Sigmoid colon (tissue), 7 donors: ENCODE measurements at regions of chr1 and their contacts with region 1.

Region 1: DNA sequence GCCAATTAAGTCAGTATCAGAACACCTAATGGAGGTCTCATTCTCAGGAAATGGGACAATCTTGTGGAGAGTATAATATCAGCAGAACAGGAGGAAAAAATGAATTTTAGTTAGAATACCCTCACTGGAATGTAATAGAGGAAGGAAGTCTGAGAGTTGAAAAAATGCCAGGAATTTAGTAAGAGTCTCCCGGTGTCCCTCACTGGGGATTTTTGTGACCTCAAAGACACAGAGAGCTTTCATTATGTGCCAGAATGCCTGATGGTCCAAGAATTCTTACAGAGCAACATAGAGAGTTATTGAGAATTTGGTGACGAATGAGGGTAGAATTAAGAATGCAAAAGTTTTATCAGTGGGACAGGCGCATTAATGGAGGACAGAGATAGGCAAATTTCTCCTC is 443.5 kb upstream of the B3GALT2 start:
- DNase-seq: no peak
- H3K4me3 ChIP-seq: no peak overlapping the region
- H3K27ac ChIP-seq: no peak overlapping the region
- H3K4me1 ChIP-seq: peaks cover 0 to 38% (median 15%) of the 10 kb centered on the region in 4 donors
- H3K27me3 ChIP-seq: no peaks in the 10 kb centered on the region
- CTCF ChIP-seq: no peak
- EP300 ChIP-seq: no peak
- POLR2A ChIP-seq: no peak

Region 2: DNA sequence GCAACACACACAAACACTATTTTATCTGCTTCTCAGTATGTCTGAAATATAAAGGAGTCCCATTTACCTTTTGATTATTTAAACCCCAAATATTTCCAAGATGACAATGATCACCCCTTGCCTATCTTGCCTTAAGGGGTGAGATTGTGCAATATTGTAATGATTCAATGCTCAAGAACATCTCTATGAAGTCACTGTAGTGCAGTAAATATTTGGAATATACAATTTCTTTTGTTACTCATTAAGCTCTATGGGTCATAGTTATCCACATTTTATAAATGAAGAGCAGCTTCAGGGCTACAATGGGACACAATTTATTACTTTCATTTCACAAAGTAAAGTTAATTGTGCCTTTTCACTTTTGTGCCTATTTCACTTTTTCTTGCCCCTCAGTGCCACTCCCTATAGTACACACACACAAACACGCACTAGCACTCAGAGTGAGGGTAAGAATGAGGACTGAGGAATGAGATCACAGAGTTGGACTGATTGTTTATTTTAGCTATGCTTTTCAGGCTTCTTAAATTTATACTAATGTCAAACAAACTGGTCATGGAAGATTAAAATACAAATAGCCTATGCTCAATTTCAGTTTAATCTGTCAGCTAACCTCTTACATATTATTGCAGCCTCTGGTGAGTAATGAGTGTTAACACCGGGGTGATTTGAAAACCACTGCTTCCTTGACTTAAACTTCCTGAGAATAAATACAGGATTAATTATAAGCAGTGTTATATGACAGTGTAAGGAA is 77.6 kb after region 1 on chr1:
- intact Hi-C with region 1: loop called (anchors 5 kb)
- DNase-seq: no peak
- H3K4me3 ChIP-seq: no peak overlapping the region
- H3K27ac ChIP-seq: no peak overlapping the region
- H3K4me1 ChIP-seq: peaks cover 0 to 13% (median 7%) of the 10 kb centered on the region in 4 donors
- H3K27me3 ChIP-seq: no peaks in the 10 kb centered on the region
- CTCF ChIP-seq: no peak
- EP300 ChIP-seq: no peak
- POLR2A ChIP-seq: no peak